ENCODE measurements at regions of chr2 and their contacts with region 1.

Region 1: DNA sequence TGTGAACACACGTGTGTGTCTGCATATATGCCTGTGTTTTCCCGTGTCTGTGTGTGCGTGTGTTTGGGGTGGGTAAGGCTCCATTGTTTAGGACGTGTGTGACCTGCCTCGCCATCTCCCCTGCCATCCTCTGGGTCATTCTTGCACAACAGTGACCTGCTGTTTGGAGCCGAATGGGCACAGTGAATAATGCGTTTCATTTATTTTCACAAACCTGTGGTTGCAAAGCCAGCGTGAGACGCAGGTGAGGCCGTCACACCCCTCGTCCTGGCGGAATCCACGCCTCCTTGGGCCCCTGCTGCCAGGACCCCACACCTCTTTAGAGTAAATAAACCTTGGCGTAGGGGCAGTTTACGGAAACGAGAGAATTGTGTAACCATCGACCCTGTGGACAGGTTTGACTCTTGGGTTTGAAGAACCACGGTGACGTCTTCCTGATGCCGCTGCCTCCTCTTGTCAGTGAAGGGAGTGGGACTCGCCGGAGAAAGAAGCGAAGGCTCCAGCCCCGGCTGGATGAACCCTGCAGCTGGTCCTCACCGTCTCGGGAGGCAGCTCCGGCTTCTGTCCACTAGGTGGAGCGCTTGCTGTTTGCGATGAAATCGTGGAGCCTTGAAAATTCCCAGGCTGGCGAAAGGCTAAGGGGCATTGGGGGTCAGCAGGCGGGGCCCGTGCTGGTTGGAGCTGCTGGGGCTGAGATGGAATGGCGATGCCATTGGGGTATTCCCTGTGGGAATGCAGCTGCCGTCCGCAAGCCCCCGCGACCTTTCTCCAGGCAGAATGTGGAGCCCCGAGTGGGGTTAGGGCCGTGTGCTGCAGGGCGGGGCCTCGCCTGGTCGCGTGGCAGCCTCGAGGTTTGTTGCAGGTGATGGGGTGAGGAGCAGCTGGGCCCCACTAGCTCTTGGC is 81.1 kb downstream of the RTP5 start:
- DNase-seq: peak; percentile 71
- ATAC-seq: peak; percentile 84
- H3K4me3 ChIP-seq: peak overlapping the region in 1 of 3 experiments; percentile 29; a peak in 1 of 6 replicates
- H3K27ac ChIP-seq: no peak overlapping the region
- H3K4me1 ChIP-seq: peaks cover 22% of the 10 kb centered on the region
- H3K27me3 ChIP-seq: peaks cover 24 to 91% of the 10 kb centered on the region in 2 experiments
- CTCF ChIP-seq: peak; percentile 99
- EP300 ChIP-seq: no peak
- POLR2A ChIP-seq: no peak
- RAD21 ChIP-seq: peak; percentile 94

Region 2: GRCh38 chr2:240426797-240427721 is 1523.6 kb before region 1 on chr2:
- CTCF ChIA-PET with region 1: no interaction called
- POLR2A ChIA-PET with region 1: no interaction called
- in situ Hi-C with region 1: no loop called
- intact Hi-C with region 1: no loop called
- DNase-seq: no peak
- ATAC-seq: no peak
- H3K4me3 ChIP-seq: no peak overlapping the region
- H3K27ac ChIP-seq: no peak overlapping the region
- H3K4me1 ChIP-seq: no peaks in the 10 kb centered on the region
- H3K27me3 ChIP-seq: peaks cover 16 to 79% of the 10 kb centered on the region in 2 experiments
- CTCF ChIP-seq: no peak
- EP300 ChIP-seq: no peak
- POLR2A ChIP-seq: no peak
- RAD21 ChIP-seq: no peak

Region 3: GRCh38 chr2:241965931-241966412 is 15.3 kb after region 1 on chr2:
- CTCF ChIA-PET with region 1: no interaction called
- POLR2A ChIA-PET with region 1: no interaction called
- in situ Hi-C with region 1: no loop called
- intact Hi-C with region 1: no loop called
- DNase-seq: peak; percentile 18
- ATAC-seq: peak; percentile 98
- H3K4me3 ChIP-seq: peak overlapping the region; percentile 38 to 71 (median 68)
- H3K27ac ChIP-seq: no peak overlapping the region
- H3K4me1 ChIP-seq: peaks cover 14% of the 10 kb centered on the region
- H3K27me3 ChIP-seq: peaks cover 5 to 23% of the 10 kb centered on the region in 2 experiments; a peak in 4 of 5 replicates
- CTCF ChIP-seq: no peak
- EP300 ChIP-seq: no peak
- POLR2A ChIP-seq: no peak
- RAD21 ChIP-seq: no peak

Region 4: DNA sequence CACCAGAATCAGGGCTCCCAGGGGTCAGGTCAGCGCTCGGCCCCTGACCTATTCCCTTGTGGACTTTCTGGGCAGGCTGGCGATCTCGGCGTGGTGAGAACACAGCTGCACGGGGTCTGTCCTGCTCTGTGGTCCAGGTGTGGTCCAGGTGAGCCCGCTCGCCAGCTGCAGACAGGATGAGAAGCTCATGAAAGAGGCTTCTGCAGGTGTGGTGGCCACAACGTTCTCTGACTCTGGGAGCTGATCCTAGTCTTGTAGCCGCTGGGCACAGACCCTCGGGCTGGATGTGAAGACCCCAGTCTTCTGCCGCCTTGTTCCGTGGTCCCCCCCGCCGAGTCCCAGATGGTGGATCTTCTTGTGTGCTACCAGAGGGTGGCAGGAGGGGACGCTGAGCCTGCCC is 48.5 kb after region 1 on chr2:
- CTCF ChIA-PET with region 1: no interaction called
- POLR2A ChIA-PET with region 1: no interaction called
- in situ Hi-C with region 1: no loop called
- intact Hi-C with region 1: no loop called
- DNase-seq: no peak
- ATAC-seq: no peak; the same call in 2 of the 3 replicates
- H3K4me3 ChIP-seq: no peak overlapping the region
- H3K27ac ChIP-seq: no peak overlapping the region
- H3K4me1 ChIP-seq: peaks cover 10% of the 10 kb centered on the region
- H3K27me3 ChIP-seq: peaks cover 9 to 71% of the 10 kb centered on the region in 2 experiments
- CTCF ChIP-seq: no peak
- EP300 ChIP-seq: no peak
- POLR2A ChIP-seq: no peak
- RAD21 ChIP-seq: no peak

Region 5: GRCh38 chr2:242020196-242021004 is 69.7 kb after region 1 on chr2:
- CTCF ChIA-PET with region 1: no interaction called
- POLR2A ChIA-PET with region 1: no interaction called
- in situ Hi-C with region 1: no loop called
- intact Hi-C with region 1: loop called (anchors 2 kb)
- DNase-seq: peak; percentile 63
- ATAC-seq: peak; percentile 85
- H3K4me3 ChIP-seq: peak overlapping the region in 1 of 3 experiments; percentile 45; a peak in 1 of 6 replicates
- H3K27ac ChIP-seq: no peak overlapping the region
- H3K4me1 ChIP-seq: peaks cover 41% of the 10 kb centered on the region
- H3K27me3 ChIP-seq: peaks cover 3 to 67% of the 10 kb centered on the region in 2 experiments; a peak in 4 of 5 replicates
- CTCF ChIP-seq: peak; percentile 98
- EP300 ChIP-seq: no peak
- POLR2A ChIP-seq: no peak
- RAD21 ChIP-seq: peak; percentile 91